ENCODE measurements at regions of chr1 and their contacts with region 1.

Region 1: GRCh38 chr1:59947047-59947938 is 20.7 kb upstream of the CYP2J2 start:
- DNase-seq: peak; percentile 20 to 52
- ATAC-seq: peak; percentile 92 to 93
- H3K4me3 ChIP-seq: no peak overlapping the region
- H3K27ac ChIP-seq: no peak overlapping the region
- H3K4me1 ChIP-seq: no peaks in the 10 kb centered on the region
- CTCF ChIP-seq: peak; percentile 68
- EP300 ChIP-seq: no peak
- POLR2A ChIP-seq: no peak
- RAD21 ChIP-seq: peak; percentile 72 to 83

Region 2: GRCh38 chr1:59879574-59879973 is 67.7 kb before region 1 on chr1:
- CTCF ChIA-PET with region 1: interaction called, 18 read pairs
- POLR2A ChIA-PET with region 1: no interaction called
- DNase-seq: peak; percentile 11 to 63
- ATAC-seq: peak; percentile 59 to 87; a peak in 4 of 6 replicates
- H3K4me3 ChIP-seq: no peak overlapping the region
- H3K27ac ChIP-seq: no peak overlapping the region
- H3K4me1 ChIP-seq: no peaks in the 10 kb centered on the region
- CTCF ChIP-seq: peak; percentile 19; the same call in 2 of the 3 replicates
- EP300 ChIP-seq: no peak
- POLR2A ChIP-seq: no peak
- RAD21 ChIP-seq: peak; percentile 21 to 53; a peak in 2 of 5 replicates

Region 3: GRCh38 chr1:59903141-59903754 is 44.0 kb before region 1 on chr1:
- CTCF ChIA-PET with region 1: interaction called, 11 read pairs
- POLR2A ChIA-PET with region 1: no interaction called
- DNase-seq: peak; percentile 13 to 22
- ATAC-seq: peak; percentile 74 to 85; a peak in 5 of 6 replicates
- H3K4me3 ChIP-seq: no peak overlapping the region
- H3K27ac ChIP-seq: no peak overlapping the region
- H3K4me1 ChIP-seq: no peaks in the 10 kb centered on the region
- CTCF ChIP-seq: peak; percentile 31; the same call in 2 of the 3 replicates
- EP300 ChIP-seq: no peak
- POLR2A ChIP-seq: no peak
- RAD21 ChIP-seq: no peak; a peak in 1 of 5 replicates